ENCODE measurements at regions of chr1 and their contacts with region 1.

Region 1: DNA sequence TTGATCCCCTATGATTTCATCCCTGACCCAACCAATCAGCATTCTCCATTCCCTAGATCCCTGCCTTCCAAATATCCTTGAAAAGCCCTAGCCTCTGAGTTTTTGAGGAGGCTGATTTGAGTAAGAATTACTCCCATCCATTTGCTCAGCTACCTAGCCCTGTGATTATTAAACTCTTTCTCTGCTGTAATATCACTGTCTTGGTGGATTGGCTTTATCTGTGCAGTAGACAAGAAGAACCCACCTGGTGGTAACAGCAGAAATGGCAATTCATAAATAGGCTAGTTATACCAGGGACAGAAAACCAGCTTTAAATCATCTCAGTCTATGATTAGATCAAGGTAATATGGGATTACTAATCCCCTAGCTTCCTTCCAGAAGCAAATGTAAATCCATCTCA is 13.0 kb downstream of the IL20 start:
- DNase-seq: no peak
- ATAC-seq: no peak
- H3K4me3 Mint-ChIP-seq: no peak overlapping the region
- H3K27ac Mint-ChIP-seq: no peak overlapping the region
- H3K4me1 Mint-ChIP-seq: no peaks in the 10 kb centered on the region
- H3K27me3 Mint-ChIP-seq: peaks cover 4% of the 10 kb centered on the region

Region 2: GRCh38 chr1:206856674-206857464 is 21.6 kb before region 1 on chr1:
- CTCF ChIA-PET with region 1: interaction called, 11 read pairs
- POLR2A ChIA-PET with region 1: no interaction called
- DNase-seq: no peak
- ATAC-seq: peak; percentile 53
- H3K4me3 Mint-ChIP-seq: no peak overlapping the region
- H3K27ac Mint-ChIP-seq: no peak overlapping the region
- H3K4me1 Mint-ChIP-seq: peaks cover 15% of the 10 kb centered on the region
- H3K27me3 Mint-ChIP-seq: peaks cover 25% of the 10 kb centered on the region

Region 3: DNA sequence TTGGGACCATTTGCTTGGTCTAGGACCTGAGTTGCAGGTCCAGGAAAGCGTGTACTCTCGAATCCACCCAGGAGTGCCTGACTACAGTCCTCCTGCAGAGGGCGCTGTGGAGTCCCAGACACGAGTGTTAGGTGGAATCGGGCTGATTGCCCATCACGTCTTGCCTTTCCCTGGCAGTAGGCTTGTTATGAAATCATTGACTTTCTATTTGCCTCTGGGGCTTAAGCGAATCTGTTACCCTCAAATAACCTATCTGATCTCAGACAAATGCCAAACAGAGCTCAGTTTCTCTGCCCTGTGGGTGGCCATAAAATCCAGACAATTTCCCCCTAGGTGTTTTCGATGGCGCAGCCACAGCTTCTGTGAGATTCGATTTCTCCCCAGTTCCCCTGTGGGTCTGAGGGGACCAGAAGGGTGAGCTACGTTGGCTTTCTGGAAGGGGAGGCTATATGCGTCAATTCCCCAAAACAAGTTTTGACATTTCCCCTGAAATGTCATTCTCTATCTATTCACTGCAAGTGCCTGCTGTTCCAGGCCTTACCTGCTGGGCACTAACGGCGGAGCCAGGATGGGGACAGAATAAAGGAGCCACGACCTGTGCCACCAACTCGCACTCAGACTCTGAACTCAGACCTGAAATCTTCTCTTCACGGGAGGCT is 13.3 kb before region 1 on chr1 and contains the start of gene IL20:
- CTCF ChIA-PET with region 1: interaction called, 24 read pairs
- POLR2A ChIA-PET with region 1: no interaction called
- DNase-seq: peak; percentile 85
- ATAC-seq: peak; percentile 82
- H3K4me3 Mint-ChIP-seq: no peak within 1 kb of the TSS
- H3K27ac Mint-ChIP-seq: no peak within 1 kb of the TSS
- H3K4me1 Mint-ChIP-seq: peaks cover 6% of the 10 kb centered on the region
- H3K27me3 Mint-ChIP-seq: peaks cover 42% of the 10 kb centered on the region
- total RNA-seq, gene IL20: not detected